Activated B cell treated with CpG ODN at 0.5 μM for 24 hours (primary cell): ENCODE measurements at regions of chr2 and their contacts with region 1.

Region 1: DNA sequence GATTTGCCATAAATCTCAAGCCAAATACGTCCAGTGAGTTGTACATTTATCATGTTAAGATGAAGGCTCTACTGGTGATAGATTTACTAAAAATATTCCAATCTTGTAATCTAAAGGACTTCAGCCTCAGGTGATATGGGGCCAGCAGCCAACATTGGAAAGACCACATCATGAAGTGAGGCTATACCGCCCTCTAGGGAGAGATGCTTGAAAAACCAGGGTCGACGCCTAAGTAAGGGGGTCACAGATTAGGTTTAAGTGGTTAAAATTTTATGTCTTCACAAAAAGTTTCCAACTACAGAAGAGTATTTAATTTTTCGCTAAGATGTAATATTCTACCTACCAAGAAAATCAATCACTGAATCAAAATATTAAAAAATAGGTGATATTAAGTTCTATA is 33.3 kb downstream of the DOCK10 start:
- DNase-seq: no peak
- ATAC-seq: no peak
- H3K4me3 Mint-ChIP-seq: no peak overlapping the region
- H3K27ac Mint-ChIP-seq: peak overlapping the region; percentile 36
- H3K4me1 Mint-ChIP-seq: peaks cover 58% of the 10 kb centered on the region
- H3K27me3 Mint-ChIP-seq: no peaks in the 10 kb centered on the region
- CTCF ChIP-seq: no peak

Region 2: GRCh38 chr2:224946895-224947294 is 62.0 kb before region 1 on chr2:
- CTCF ChIA-PET with region 1: no interaction called
- POLR2A ChIA-PET with region 1: interaction called, 11 read pairs
- intact Hi-C with region 1: no loop called
- DNase-seq: no peak
- ATAC-seq: peak; percentile 65
- H3K4me3 Mint-ChIP-seq: peak overlapping the region; percentile 90
- H3K27ac Mint-ChIP-seq: peak overlapping the region; percentile 92
- H3K4me1 Mint-ChIP-seq: peaks cover 87% of the 10 kb centered on the region
- H3K27me3 Mint-ChIP-seq: no peaks in the 10 kb centered on the region
- CTCF ChIP-seq: no peak

Region 3: GRCh38 chr2:225025917-225026571 is 17.1 kb after region 1 on chr2:
- CTCF ChIA-PET with region 1: no interaction called
- POLR2A ChIA-PET with region 1: interaction called, 5 read pairs
- intact Hi-C with region 1: loop called (anchors 2 kb)
- DNase-seq: no peak
- ATAC-seq: peak; percentile 47
- H3K4me3 Mint-ChIP-seq: peak overlapping the region; percentile 39
- H3K27ac Mint-ChIP-seq: peak overlapping the region; percentile 39
- H3K4me1 Mint-ChIP-seq: peaks cover 46% of the 10 kb centered on the region
- H3K27me3 Mint-ChIP-seq: no peaks in the 10 kb centered on the region
- CTCF ChIP-seq: no peak

Region 4: GRCh38 chr2:225479386-225479785 is 470.5 kb after region 1 on chr2:
- CTCF ChIA-PET with region 1: no interaction called
- POLR2A ChIA-PET with region 1: no interaction called
- intact Hi-C with region 1: no loop called
- DNase-seq: no peak
- ATAC-seq: no peak
- H3K4me3 Mint-ChIP-seq: no peak overlapping the region
- H3K27ac Mint-ChIP-seq: no peak overlapping the region
- H3K4me1 Mint-ChIP-seq: no peaks in the 10 kb centered on the region
- H3K27me3 Mint-ChIP-seq: no peaks in the 10 kb centered on the region
- CTCF ChIP-seq: no peak